CD4-positive, alpha-beta memory T cell (primary cell): ENCODE measurements at regions of chr6 and their contacts with region 1.

Region 1: DNA sequence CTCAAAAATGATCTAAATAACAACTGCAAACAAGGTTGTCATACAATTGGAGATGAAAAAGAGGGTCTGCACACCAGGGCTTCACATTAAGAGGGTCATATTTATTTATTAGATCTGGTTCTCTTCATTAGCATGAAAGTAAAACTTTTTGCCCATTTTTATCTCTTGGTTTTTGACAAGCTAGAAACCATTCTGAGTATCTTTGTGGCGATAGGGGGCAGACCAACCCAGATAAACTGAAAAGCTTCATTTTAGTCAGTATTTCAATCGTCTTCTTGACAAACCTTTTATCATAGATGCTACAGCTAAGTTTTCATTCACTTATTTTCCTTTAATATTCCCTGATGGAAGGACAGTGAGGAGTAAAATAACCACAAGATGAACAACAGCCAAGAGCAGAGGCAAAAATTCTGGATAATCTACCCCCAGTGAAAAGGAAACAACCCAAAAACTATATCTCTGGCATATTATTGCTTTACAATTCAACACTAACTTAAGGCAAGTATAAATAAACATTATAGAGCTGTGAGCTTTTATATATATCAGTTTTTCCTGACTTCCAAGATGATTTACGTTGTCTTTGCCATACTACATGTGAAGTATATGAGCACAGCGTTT is 45.2 kb downstream of the THEMIS start:
- DNase-seq: peak; percentile 49 to 59 (median 52)
- H3K4me3 ChIP-seq: no peak overlapping the region
- H3K4me3 Mint-ChIP-seq: peak overlapping the region in 6 of 8 donors; percentile 1 to 74 (median 48)
- H3K27ac ChIP-seq: peak overlapping the region; percentile 29
- H3K27ac Mint-ChIP-seq: peak overlapping the region; percentile 42 to 92 (median 66)
- H3K4me1 ChIP-seq: peaks cover 77% of the 10 kb centered on the region
- H3K4me1 Mint-ChIP-seq: peaks cover 57 to 83% (median 72%) of the 10 kb centered on the region in 4 donors
- H3K27me3 ChIP-seq: no peaks in the 10 kb centered on the region
- H3K27me3 Mint-ChIP-seq: no peaks in the 10 kb centered on the region

Region 2: GRCh38 chr6:127328043-127328609 is 527.5 kb before region 1 on chr6:
- CTCF ChIA-PET with region 1: no interaction called
- POLR2A ChIA-PET with region 1: no interaction called
- intact Hi-C with region 1: no loop called
- DNase-seq: no peak
- H3K4me3 ChIP-seq: no peak overlapping the region
- H3K4me3 Mint-ChIP-seq: no peak overlapping the region
- H3K27ac ChIP-seq: no peak overlapping the region
- H3K27ac Mint-ChIP-seq: no peak overlapping the region
- H3K4me1 ChIP-seq: no peaks in the 10 kb centered on the region
- H3K4me1 Mint-ChIP-seq: peaks cover 2 to 12% (median 11%) of the 10 kb centered on the region in 4 donors
- H3K27me3 ChIP-seq: no peaks in the 10 kb centered on the region
- H3K27me3 Mint-ChIP-seq: no peaks in the 10 kb centered on the region

Region 3: GRCh38 chr6:127592964-127593363 is 262.7 kb before region 1 on chr6:
- CTCF ChIA-PET with region 1: no interaction called
- POLR2A ChIA-PET with region 1: no interaction called
- intact Hi-C with region 1: no loop called
- DNase-seq: no peak
- H3K4me3 ChIP-seq: no peak overlapping the region
- H3K4me3 Mint-ChIP-seq: no peak overlapping the region
- H3K27ac ChIP-seq: no peak overlapping the region
- H3K27ac Mint-ChIP-seq: no peak overlapping the region
- H3K4me1 ChIP-seq: no peaks in the 10 kb centered on the region
- H3K4me1 Mint-ChIP-seq: no peaks in the 10 kb centered on the region
- H3K27me3 ChIP-seq: no peaks in the 10 kb centered on the region
- H3K27me3 Mint-ChIP-seq: peaks cover 1 to 2% of the 10 kb centered on the region in 2 donors

Region 4: GRCh38 chr6:127796713-127797112 is 58.9 kb before region 1 on chr6:
- CTCF ChIA-PET with region 1: no interaction called
- POLR2A ChIA-PET with region 1: no interaction called
- intact Hi-C with region 1: no loop called
- DNase-seq: no peak
- H3K4me3 ChIP-seq: no peak overlapping the region
- H3K4me3 Mint-ChIP-seq: peak overlapping the region in 2 of 8 donors; percentile 9 to 46
- H3K27ac ChIP-seq: no peak overlapping the region
- H3K27ac Mint-ChIP-seq: peak overlapping the region in 2 of 7 donors; percentile 17 to 36
- H3K4me1 ChIP-seq: peaks cover 74% of the 10 kb centered on the region
- H3K4me1 Mint-ChIP-seq: peaks cover 64 to 84% (median 73%) of the 10 kb centered on the region in 4 donors
- H3K27me3 ChIP-seq: no peaks in the 10 kb centered on the region
- H3K27me3 Mint-ChIP-seq: no peaks in the 10 kb centered on the region

Region 5: DNA sequence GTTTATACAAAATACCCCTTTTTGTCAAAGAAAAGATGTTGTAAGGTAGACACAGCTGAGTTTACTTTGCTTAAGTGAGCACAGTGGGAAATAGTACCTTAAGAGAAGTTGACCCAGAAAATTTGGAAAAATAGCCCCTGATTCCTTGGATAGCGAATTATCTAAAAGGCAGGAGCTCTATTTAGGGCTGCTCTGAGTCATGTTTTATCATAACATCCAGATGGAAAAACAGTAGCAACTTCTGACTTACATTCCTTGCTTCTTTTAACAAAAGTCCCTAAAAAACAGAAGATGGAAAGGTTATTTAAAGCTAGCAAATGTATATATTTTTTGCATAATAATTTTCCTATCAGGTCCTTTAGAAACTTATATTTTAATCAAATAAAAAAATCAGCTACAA is 13.8 kb before region 1 on chr6:
- CTCF ChIA-PET with region 1: interaction called, 18 read pairs
- POLR2A ChIA-PET with region 1: interaction called, 3 read pairs
- intact Hi-C with region 1: no loop called
- DNase-seq: no peak
- H3K4me3 ChIP-seq: no peak overlapping the region
- H3K4me3 Mint-ChIP-seq: no peak overlapping the region
- H3K27ac ChIP-seq: no peak overlapping the region
- H3K27ac Mint-ChIP-seq: no peak overlapping the region
- H3K4me1 ChIP-seq: peaks cover 28% of the 10 kb centered on the region
- H3K4me1 Mint-ChIP-seq: peaks cover 28 to 47% (median 38%) of the 10 kb centered on the region in 4 donors
- H3K27me3 ChIP-seq: no peaks in the 10 kb centered on the region
- H3K27me3 Mint-ChIP-seq: no peaks in the 10 kb centered on the region

Region 6: GRCh38 chr6:127907960-127908640 is 52.4 kb after region 1 on chr6:
- CTCF ChIA-PET with region 1: interaction called, 15 read pairs
- POLR2A ChIA-PET with region 1: interaction called, 11 read pairs
- intact Hi-C with region 1: no loop called
- DNase-seq: peak in 4 of 5 donors; percentile 36 to 43 (median 39)
- H3K4me3 ChIP-seq: peak overlapping the region; percentile 44 to 72
- H3K4me3 Mint-ChIP-seq: peak overlapping the region; percentile 82 to 98 (median 90)
- H3K27ac ChIP-seq: peak overlapping the region; percentile 77
- H3K27ac Mint-ChIP-seq: peak overlapping the region; percentile 87 to 98 (median 95)
- H3K4me1 ChIP-seq: peaks cover 56% of the 10 kb centered on the region
- H3K4me1 Mint-ChIP-seq: peaks cover 48 to 76% (median 60%) of the 10 kb centered on the region in 4 donors
- H3K27me3 ChIP-seq: no peaks in the 10 kb centered on the region
- H3K27me3 Mint-ChIP-seq: no peaks in the 10 kb centered on the region

Region 7: GRCh38 chr6:127971945-127972391 is 116.3 kb after region 1 on chr6:
- CTCF ChIA-PET with region 1: interaction called, 48 read pairs
- POLR2A ChIA-PET with region 1: interaction called, 13 read pairs
- intact Hi-C with region 1: loop called (anchors 1 kb)
- DNase-seq: peak; percentile 81 to 89 (median 83)
- H3K4me3 ChIP-seq: peak overlapping the region in 1 of 2 donors; percentile 36
- H3K4me3 Mint-ChIP-seq: peak overlapping the region; percentile 87 to 95 (median 90)
- H3K27ac ChIP-seq: peak overlapping the region; percentile 71
- H3K27ac Mint-ChIP-seq: peak overlapping the region; percentile 92 to 98 (median 98)
- H3K4me1 ChIP-seq: peaks cover 64% of the 10 kb centered on the region
- H3K4me1 Mint-ChIP-seq: peaks cover 41 to 56% (median 46%) of the 10 kb centered on the region in 4 donors
- H3K27me3 ChIP-seq: no peaks in the 10 kb centered on the region
- H3K27me3 Mint-ChIP-seq: no peaks in the 10 kb centered on the region

Region 8: DNA sequence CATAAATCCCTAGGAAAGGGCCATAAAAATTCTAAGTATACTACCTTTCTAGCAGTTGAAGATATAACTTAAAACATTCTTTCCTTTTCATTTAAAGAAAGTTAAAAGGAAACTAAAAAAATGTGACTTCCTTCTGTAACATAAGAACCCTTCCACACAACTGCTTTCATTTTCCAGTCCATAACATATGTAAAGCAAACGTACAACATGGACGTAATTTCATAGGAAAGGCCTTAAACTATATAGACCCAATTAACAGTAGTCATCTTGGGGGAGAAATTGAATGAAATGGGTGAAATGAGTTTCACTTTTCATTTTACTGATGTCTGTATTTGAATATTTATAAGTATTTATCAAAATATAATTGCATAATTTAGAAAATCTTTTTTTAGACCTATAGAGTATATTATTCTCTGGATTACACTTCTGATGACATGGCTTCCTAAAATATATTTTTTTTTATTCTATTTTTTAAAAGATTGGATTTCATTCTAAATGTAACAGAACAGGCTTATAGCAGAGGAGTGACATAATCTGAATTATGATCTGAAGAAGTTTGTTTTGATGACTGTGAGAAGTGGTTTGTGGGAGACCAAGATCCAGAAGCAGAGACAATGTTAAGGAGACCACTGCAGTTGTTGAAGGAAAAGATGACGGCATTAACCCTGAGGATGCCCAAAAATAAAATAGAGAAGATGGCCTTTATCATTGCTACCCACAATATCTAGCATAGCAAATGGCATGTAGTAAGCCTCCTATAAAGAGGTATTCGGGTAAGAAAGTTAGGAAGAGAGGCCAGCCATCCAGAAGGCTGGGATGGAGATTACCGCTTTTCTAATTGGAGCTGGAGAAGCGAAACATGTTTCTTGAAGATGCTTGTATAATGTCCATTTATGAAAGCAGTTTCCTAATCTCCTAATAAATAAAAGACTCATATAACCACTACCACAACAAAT is 404.4 kb after region 1 on chr6:
- CTCF ChIA-PET with region 1: no interaction called
- POLR2A ChIA-PET with region 1: no interaction called
- intact Hi-C with region 1: loop called (anchors 5 kb)
- DNase-seq: peak in 4 of 5 donors; percentile 13 to 36 (median 25)
- H3K4me3 ChIP-seq: peak overlapping the region; percentile 28 to 30
- H3K4me3 Mint-ChIP-seq: peak overlapping the region; percentile 69 to 89 (median 82)
- H3K27ac ChIP-seq: peak overlapping the region; percentile 32
- H3K27ac Mint-ChIP-seq: peak overlapping the region; percentile 61 to 91 (median 77)
- H3K4me1 ChIP-seq: peaks cover 21% of the 10 kb centered on the region
- H3K4me1 Mint-ChIP-seq: peaks cover 19 to 30% (median 25%) of the 10 kb centered on the region in 4 donors
- H3K27me3 ChIP-seq: no peaks in the 10 kb centered on the region
- H3K27me3 Mint-ChIP-seq: no peaks in the 10 kb centered on the region

Region 9: GRCh38 chr6:128725271-128726233 is 869.9 kb after region 1 on chr6:
- CTCF ChIA-PET with region 1: interaction called, 4 read pairs
- POLR2A ChIA-PET with region 1: no interaction called
- intact Hi-C with region 1: loop called (anchors 10 kb)
- DNase-seq: peak in 4 of 5 donors; percentile 8 to 19 (median 12)
- H3K4me3 ChIP-seq: no peak overlapping the region
- H3K4me3 Mint-ChIP-seq: no peak overlapping the region
- H3K27ac ChIP-seq: no peak overlapping the region
- H3K27ac Mint-ChIP-seq: no peak overlapping the region
- H3K4me1 ChIP-seq: no peaks in the 10 kb centered on the region
- H3K4me1 Mint-ChIP-seq: no peaks in the 10 kb centered on the region
- H3K27me3 ChIP-seq: no peaks in the 10 kb centered on the region
- H3K27me3 Mint-ChIP-seq: peaks cover 13 to 14% of the 10 kb centered on the region in 2 donors